ENCODE measurements at regions of chr19 and their contacts with region 1.

Region 1: GRCh38 chr19:49301165-49301865 is 23.7 kb downstream of the SLC6A16 start:
- DNase-seq: peak; percentile 90
- H3K4me3 Mint-ChIP-seq: peak overlapping the region; percentile 50
- H3K27ac Mint-ChIP-seq: no peak overlapping the region
- H3K4me1 Mint-ChIP-seq: peaks cover 2% of the 10 kb centered on the region
- H3K27me3 Mint-ChIP-seq: no peaks in the 10 kb centered on the region

Region 2: GRCh38 chr19:48624067-48624594 is 677.2 kb before region 1 on chr19:
- CTCF ChIA-PET with region 1: no interaction called
- intact Hi-C with region 1: no loop called
- DNase-seq: peak; percentile 98
- H3K4me3 Mint-ChIP-seq: peak overlapping the region; percentile 79
- H3K27ac Mint-ChIP-seq: peak overlapping the region; percentile 95
- H3K4me1 Mint-ChIP-seq: peaks cover 50% of the 10 kb centered on the region
- H3K27me3 Mint-ChIP-seq: no peaks in the 10 kb centered on the region

Region 3: DNA sequence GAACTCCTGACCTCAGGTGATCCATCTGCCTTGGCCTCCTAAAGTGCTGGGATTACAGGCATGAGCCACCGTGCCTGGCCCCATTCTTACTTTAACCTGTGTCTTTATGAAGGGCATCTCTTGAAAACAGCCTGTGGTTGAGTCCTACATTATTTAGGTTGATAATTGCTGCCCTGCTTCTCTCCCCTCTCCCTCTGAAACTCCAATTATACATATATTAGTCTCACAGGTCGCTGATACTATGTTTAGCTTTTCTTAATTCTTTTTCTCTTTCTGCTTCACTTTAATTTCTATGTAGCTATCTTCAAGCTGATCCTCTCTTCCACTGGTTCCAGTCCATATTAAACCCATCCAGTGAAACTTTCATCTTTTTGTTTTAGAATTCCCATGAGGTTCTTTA is 51.4 kb before region 1 on chr19:
- CTCF ChIA-PET with region 1: interaction called, 13 read pairs
- intact Hi-C with region 1: no loop called
- DNase-seq: no peak
- H3K4me3 Mint-ChIP-seq: no peak overlapping the region
- H3K27ac Mint-ChIP-seq: no peak overlapping the region
- H3K4me1 Mint-ChIP-seq: no peaks in the 10 kb centered on the region
- H3K27me3 Mint-ChIP-seq: peaks cover 10% of the 10 kb centered on the region

Region 4: GRCh38 chr19:49264258-49264657 is 37.1 kb before region 1 on chr19:
- CTCF ChIA-PET with region 1: interaction called, 13 read pairs
- intact Hi-C with region 1: loop called (anchors 1 kb)
- DNase-seq: no peak
- H3K4me3 Mint-ChIP-seq: no peak overlapping the region
- H3K27ac Mint-ChIP-seq: no peak overlapping the region
- H3K4me1 Mint-ChIP-seq: no peaks in the 10 kb centered on the region
- H3K27me3 Mint-ChIP-seq: no peaks in the 10 kb centered on the region

Region 5: GRCh38 chr19:49331616-49332055 is 30.3 kb after region 1 on chr19:
- CTCF ChIA-PET with region 1: interaction called, 15 read pairs
- intact Hi-C with region 1: loop called (anchors 2 kb)
- DNase-seq: peak; percentile 84
- H3K4me3 Mint-ChIP-seq: peak overlapping the region; percentile 44
- H3K27ac Mint-ChIP-seq: peak overlapping the region; percentile 81
- H3K4me1 Mint-ChIP-seq: peaks cover 74% of the 10 kb centered on the region
- H3K27me3 Mint-ChIP-seq: no peaks in the 10 kb centered on the region